OCI-LY7 (cell line): ENCODE measurements at regions of chr6 and their contacts with region 1.

Region 1: DNA sequence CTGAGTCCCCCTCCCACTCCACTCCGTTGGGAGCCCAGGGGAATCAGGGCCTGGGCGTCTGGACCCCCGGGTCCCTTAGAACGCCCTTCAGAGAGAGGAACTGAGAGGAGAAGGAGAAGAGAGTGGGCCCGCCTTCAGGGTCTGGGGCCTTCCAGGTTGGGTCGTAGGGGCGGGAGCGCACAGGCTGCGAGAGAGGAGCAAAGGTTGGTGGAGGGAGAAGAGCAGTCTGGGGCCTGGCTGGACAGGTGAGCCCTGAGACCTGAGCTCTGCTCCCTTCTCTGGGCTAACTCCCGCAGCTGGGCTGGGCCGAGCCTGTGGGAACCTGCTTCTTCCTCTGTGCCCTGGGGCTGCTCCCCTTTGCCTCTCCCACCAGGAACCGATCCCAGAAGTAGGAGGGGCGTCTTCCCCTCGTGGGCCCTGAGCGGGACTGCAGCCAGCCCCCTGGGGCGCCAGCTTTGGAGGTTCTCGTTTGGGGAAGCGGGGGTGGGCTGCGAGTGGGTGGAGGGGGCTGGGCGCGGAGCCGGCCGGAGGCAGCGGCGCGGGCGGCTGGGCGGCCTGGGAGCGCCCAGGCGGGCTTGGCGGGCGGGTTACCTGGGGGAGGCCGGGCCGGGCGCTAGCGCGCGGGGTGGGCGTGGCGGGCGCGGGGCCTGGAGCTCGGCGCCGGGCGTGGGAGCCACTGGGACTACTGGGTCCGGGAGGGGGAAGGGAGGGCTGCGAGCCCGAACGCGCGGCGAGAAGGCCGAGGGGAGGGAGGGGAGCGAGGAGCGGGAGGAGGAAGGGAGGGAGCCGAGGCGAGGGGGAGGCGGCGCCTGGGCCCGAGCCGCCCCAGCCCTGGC is at the start of gene DDR1:
- DNase-seq: peak; percentile 58
- H3K4me3 ChIP-seq: peak within 1 kb of the TSS; percentile 68
- H3K27ac ChIP-seq: peak within 1 kb of the TSS; percentile 85
- H3K4me1 ChIP-seq: peaks cover 53% of the 10 kb centered on the region
- CTCF ChIP-seq: no peak
- total RNA-seq, gene DDR1: 14.0 and 15.4 TPM in 2 replicates

Region 2: GRCh38 chr6:30672445-30673253 is 211.3 kb before region 1 on chr6 and contains the start of gene DHX16:
- CTCF ChIA-PET with region 1: no interaction called
- POLR2A ChIA-PET with region 1: no interaction called
- intact Hi-C with region 1: loop called (anchors 10 kb)
- DNase-seq: peak; percentile 97
- H3K4me3 ChIP-seq: peak within 1 kb of the TSS; percentile 89
- H3K27ac ChIP-seq: no peak within 1 kb of the TSS
- H3K4me1 ChIP-seq: peaks cover 12% of the 10 kb centered on the region
- CTCF ChIP-seq: peak; percentile 97
- total RNA-seq, gene DHX16: 27.1 and 30.5 TPM in 2 replicates

Region 3: GRCh38 chr6:30907758-30908591 is 24.1 kb after region 1 on chr6 and contains the start of gene GTF2H4:
- CTCF ChIA-PET with region 1: no interaction called
- POLR2A ChIA-PET with region 1: interaction called, 15 read pairs
- intact Hi-C with region 1: no loop called
- DNase-seq: peak; percentile 98
- H3K4me3 ChIP-seq: peak within 1 kb of the TSS; percentile 91
- H3K27ac ChIP-seq: peak within 1 kb of the TSS; percentile 15
- H3K4me1 ChIP-seq: peaks cover 17% of the 10 kb centered on the region
- CTCF ChIP-seq: no peak
- total RNA-seq, gene GTF2H4: 30.5 and 38.4 TPM in 2 replicates

Region 4: GRCh38 chr6:30914076-30914853 is 30.4 kb after region 1 on chr6 and contains the start of gene VARS2:
- CTCF ChIA-PET with region 1: interaction called, 5 read pairs
- POLR2A ChIA-PET with region 1: interaction called, 4 read pairs
- intact Hi-C with region 1: loop called (anchors 2 kb)
- DNase-seq: peak; percentile 87
- H3K4me3 ChIP-seq: peak within 1 kb of the TSS; percentile 76
- H3K27ac ChIP-seq: peak within 1 kb of the TSS; percentile 63
- H3K4me1 ChIP-seq: peaks cover 23% of the 10 kb centered on the region
- CTCF ChIP-seq: peak; percentile 44
- total RNA-seq, gene VARS2: 71.4 and 81.8 TPM in 2 replicates

Region 5: DNA sequence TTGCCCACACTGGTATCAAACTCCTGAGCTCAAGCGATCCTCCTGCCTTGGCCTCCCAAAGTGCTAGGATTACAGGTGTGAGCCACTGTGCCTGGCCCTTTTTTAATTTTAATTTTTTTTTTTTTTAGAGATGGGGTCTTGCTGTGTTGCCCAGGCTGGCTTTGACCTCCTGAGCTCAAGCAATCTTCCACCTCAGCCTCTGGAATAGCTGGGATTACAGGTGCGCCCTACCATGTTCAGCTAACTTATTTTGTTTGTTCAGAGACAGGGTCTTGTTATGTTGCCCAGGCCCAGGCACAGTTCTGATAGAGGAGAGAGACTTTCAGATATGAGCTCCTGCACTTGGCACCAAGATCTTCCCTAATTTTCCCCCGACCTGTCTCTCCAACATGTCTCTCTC is 246.8 kb after region 1 on chr6:
- CTCF ChIA-PET with region 1: interaction called, 12 read pairs
- POLR2A ChIA-PET with region 1: interaction called, 3 read pairs
- intact Hi-C with region 1: no loop called
- DNase-seq: no peak
- H3K4me3 ChIP-seq: no peak overlapping the region
- H3K27ac ChIP-seq: no peak overlapping the region
- H3K4me1 ChIP-seq: no peaks in the 10 kb centered on the region
- CTCF ChIP-seq: no peak